ENCODE measurements at regions of chr6 and their contacts with region 1.

Region 1: DNA sequence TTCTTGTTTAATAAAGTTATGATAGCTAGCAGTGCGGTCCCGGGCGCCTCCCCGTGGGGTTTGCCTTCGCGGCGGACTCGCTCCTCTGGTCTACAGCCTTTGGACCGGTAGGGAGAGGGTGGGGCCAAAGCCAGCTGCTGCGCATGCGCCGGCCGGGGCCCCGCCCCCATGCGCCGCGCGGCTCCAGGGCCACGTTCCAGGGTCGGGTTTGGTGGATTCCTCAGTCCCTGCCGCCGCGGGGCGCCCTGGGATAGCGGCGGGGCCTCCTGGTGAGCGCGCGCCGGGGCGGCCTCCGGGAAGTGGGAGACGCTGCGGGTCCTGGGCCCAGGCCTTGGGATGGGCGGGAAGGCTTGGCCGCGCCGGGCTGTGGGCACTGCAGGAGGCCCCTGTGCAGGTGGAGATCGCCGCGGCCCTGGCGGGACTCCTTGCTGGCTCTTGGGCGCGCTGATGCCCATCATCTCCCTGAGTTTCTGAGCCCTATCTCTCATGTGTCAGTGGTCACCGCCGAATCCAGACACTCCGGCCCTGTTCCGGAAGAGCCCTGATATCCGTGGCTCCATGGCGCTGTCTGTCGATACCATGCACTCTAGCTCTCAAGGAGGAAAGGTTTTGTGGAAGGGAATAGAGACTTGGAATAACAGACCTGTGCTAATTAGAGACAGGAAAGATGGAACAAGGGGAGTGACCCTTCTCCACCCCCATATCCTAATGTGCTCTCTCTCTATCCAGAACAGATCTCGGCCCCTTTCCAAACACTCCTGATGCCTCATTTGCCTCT is at the start of gene VARS2:
- DNase-seq: peak; percentile 61 to 97
- H3K4me3 ChIP-seq: peak within 1 kb of the TSS; percentile 41 to 74 (median 66)
- H3K27ac ChIP-seq: no peak within 1 kb of the TSS
- H3K4me1 ChIP-seq: peaks cover 0 to 14% (median 6%) of the 10 kb centered on the region in 4 experiments; a peak in 5 of 7 replicates
- H3K27me3 ChIP-seq: no peaks in the 10 kb centered on the region
- CTCF ChIP-seq: no peak
- EP300 ChIP-seq: no peak
- POLR2A ChIP-seq: peak in 1 of 2 experiments; percentile 74; a peak in 2 of 3 replicates
- RAD21 ChIP-seq: 0 out of 4 replicates have a peak, but pooled peaks of 1 of the 2 experiments have one; percentile 8
- total RNA-seq, gene VARS2: 41.2 and 47.7 TPM in 2 replicates

Region 2: GRCh38 chr6:30102970-30103874 is 811.0 kb before region 1 on chr6:
- CTCF ChIA-PET with region 1: no interaction called
- POLR2A ChIA-PET with region 1: no interaction called
- DNase-seq: peak in 1 of 2 experiments; percentile 88
- H3K4me3 ChIP-seq: peak overlapping the region; percentile 34 to 65 (median 58); a peak in 7 of 8 replicates
- H3K27ac ChIP-seq: no peak overlapping the region
- H3K4me1 ChIP-seq: peaks cover 3 to 15% (median 9%) of the 10 kb centered on the region in 4 experiments; a peak in 6 of 7 replicates
- H3K27me3 ChIP-seq: peaks cover 32 to 62% (median 55%) of the 10 kb centered on the region in 4 experiments
- CTCF ChIP-seq: peak; percentile 88 to 95 (median 94)
- EP300 ChIP-seq: no peak; a peak in 1 of 3 replicates
- POLR2A ChIP-seq: no peak
- RAD21 ChIP-seq: peak; percentile 90 to 92

Region 3: GRCh38 chr6:30828027-30828960 is 86.0 kb before region 1 on chr6:
- CTCF ChIA-PET with region 1: interaction called, 98 read pairs
- POLR2A ChIA-PET with region 1: interaction called, 4 read pairs
- DNase-seq: peak in 1 of 2 experiments; percentile 93
- H3K4me3 ChIP-seq: no peak overlapping the region
- H3K27ac ChIP-seq: no peak overlapping the region
- H3K4me1 ChIP-seq: peaks cover 0 to 11% (median 3%) of the 10 kb centered on the region in 4 experiments; a peak in 4 of 7 replicates
- H3K27me3 ChIP-seq: no peaks in the 10 kb centered on the region
- CTCF ChIP-seq: peak; percentile 92 to 95 (median 94)
- EP300 ChIP-seq: no peak
- POLR2A ChIP-seq: peak in 1 of 2 experiments; percentile 34; a peak in 1 of 3 replicates
- RAD21 ChIP-seq: peak; percentile 97

Region 4: DNA sequence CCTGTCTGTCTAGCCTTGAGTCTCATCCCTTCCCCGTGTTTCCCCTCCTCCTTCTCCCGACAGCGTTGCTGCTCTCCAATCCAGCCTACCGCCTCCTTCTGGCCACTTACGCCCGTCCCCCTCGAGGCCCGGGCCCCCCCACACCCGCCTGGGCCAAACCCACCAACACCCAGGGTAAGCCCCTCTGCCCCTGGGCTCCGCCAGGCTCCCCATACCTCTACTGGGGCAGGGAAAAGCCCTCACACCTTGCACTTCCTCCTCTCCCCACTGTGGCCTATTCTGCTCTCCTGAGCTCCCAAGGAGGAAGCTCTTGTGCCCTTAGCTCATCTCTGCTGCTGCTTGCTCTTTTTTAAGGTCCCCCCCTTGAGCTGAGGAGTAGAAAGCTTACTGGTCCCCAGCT is 18.9 kb before region 1 on chr6:
- CTCF ChIA-PET with region 1: interaction called, 12 read pairs
- POLR2A ChIA-PET with region 1: interaction called, 16 read pairs
- DNase-seq: no peak
- H3K4me3 ChIP-seq: no peak overlapping the region
- H3K27ac ChIP-seq: no peak overlapping the region
- H3K4me1 ChIP-seq: peaks cover 0 to 7% (median 1%) of the 10 kb centered on the region in 4 experiments; a peak in 3 of 7 replicates
- H3K27me3 ChIP-seq: no peaks in the 10 kb centered on the region
- CTCF ChIP-seq: no peak
- EP300 ChIP-seq: no peak
- POLR2A ChIP-seq: no peak
- RAD21 ChIP-seq: no peak

Region 5: GRCh38 chr6:30942338-30943060 is 28.2 kb after region 1 on chr6:
- CTCF ChIA-PET with region 1: interaction called, 52 read pairs
- POLR2A ChIA-PET with region 1: interaction called, 5 read pairs
- DNase-seq: peak; percentile 83 to 95
- H3K4me3 ChIP-seq: no peak overlapping the region
- H3K27ac ChIP-seq: no peak overlapping the region
- H3K4me1 ChIP-seq: peaks cover 6 to 14% (median 9%) of the 10 kb centered on the region in 4 experiments
- H3K27me3 ChIP-seq: no peaks in the 10 kb centered on the region; a peak in 1 of 7 replicates
- CTCF ChIP-seq: peak; percentile 48 to 62 (median 61)
- EP300 ChIP-seq: 0 out of 3 replicates have a peak, but pooled peaks of 1 of the 2 experiments have one; percentile 44
- POLR2A ChIP-seq: peak in 1 of 2 experiments; percentile 60; a peak in 2 of 3 replicates
- RAD21 ChIP-seq: peak; percentile 49 to 58

Region 6: GRCh38 chr6:30981942-30982772 is 67.9 kb after region 1 on chr6:
- CTCF ChIA-PET with region 1: interaction called, 21 read pairs
- POLR2A ChIA-PET with region 1: interaction called, 3 read pairs
- DNase-seq: peak in 1 of 2 experiments; percentile 68
- H3K4me3 ChIP-seq: peak overlapping the region in 3 of 4 experiments; percentile 3 to 47 (median 6); a peak in 4 of 8 replicates
- H3K27ac ChIP-seq: no peak overlapping the region
- H3K4me1 ChIP-seq: peaks cover 0 to 2% (median 0%) of the 10 kb centered on the region in 4 experiments; a peak in 1 of 7 replicates
- H3K27me3 ChIP-seq: no peaks in the 10 kb centered on the region
- CTCF ChIP-seq: peak; percentile 39 to 80 (median 65); a peak in 3 of 4 replicates
- EP300 ChIP-seq: no peak
- POLR2A ChIP-seq: no peak
- RAD21 ChIP-seq: peak; percentile 38 to 53; a peak in 3 of 4 replicates

Region 7: GRCh38 chr6:31068669-31069340 is 154.5 kb after region 1 on chr6:
- CTCF ChIA-PET with region 1: interaction called, 143 read pairs
- POLR2A ChIA-PET with region 1: interaction called, 17 read pairs
- DNase-seq: peak; percentile 36 to 90
- H3K4me3 ChIP-seq: no peak overlapping the region
- H3K27ac ChIP-seq: no peak overlapping the region; the same call in 1 of the 2 replicates
- H3K4me1 ChIP-seq: peaks cover 3 to 15% (median 7%) of the 10 kb centered on the region in 4 experiments; a peak in 6 of 7 replicates
- H3K27me3 ChIP-seq: no peaks in the 10 kb centered on the region
- CTCF ChIP-seq: peak; percentile 83 to 98 (median 96)
- EP300 ChIP-seq: no peak
- POLR2A ChIP-seq: no peak
- RAD21 ChIP-seq: peak; percentile 75 to 76